Posterior vena cava (tissue), 2 donors: ENCODE measurements at regions of chr15 and their contacts with region 1.

Region 1: GRCh38 chr15:26157081-26157480 is 294.0 kb upstream of the ATP10A start:
- DNase-seq: no peak

Region 2: GRCh38 chr15:25775317-25775912 is 381.7 kb before region 1 on chr15:
- intact Hi-C with region 1: no loop called
- DNase-seq: peak; percentile 90

Region 3: GRCh38 chr15:26232666-26233065 is 75.6 kb after region 1 on chr15:
- intact Hi-C with region 1: no loop called
- DNase-seq: no peak

Region 4: GRCh38 chr15:27912283-27912682 is 1755.2 kb after region 1 on chr15:
- intact Hi-C with region 1: loop called in 1 of 2 experiments (anchors 10 kb)
- DNase-seq: no peak